Esophagus squamous epithelium (tissue), 5 donors: ENCODE measurements at regions of chr1 and their contacts with region 1.

Region 1: DNA sequence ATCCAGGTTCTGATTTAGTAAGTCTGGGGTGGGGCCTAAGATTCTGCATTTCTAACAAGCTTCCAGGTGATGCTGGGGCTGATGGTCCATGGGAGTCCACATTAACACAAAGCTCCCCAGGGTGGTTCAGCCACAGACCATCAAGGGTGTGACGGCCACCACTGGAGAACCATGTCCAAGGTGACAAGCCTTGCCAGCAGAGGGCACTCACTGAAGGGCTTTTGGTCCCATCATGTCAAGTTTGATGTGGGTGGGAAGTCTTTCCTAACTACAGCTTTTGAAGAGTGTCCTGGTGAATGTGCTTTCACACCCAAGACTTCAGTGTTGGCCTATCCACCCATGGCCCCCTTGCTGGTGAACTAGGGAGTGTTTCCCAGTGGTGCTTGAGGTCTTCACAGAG is 67.1 kb downstream of the UBE2T start:
- DNase-seq: no peak
- H3K4me3 ChIP-seq: no peak overlapping the region
- H3K27ac ChIP-seq: no peak overlapping the region
- H3K4me1 ChIP-seq: no peaks in the 10 kb centered on the region
- H3K27me3 ChIP-seq: peaks cover 0 to 35% (median 0%) of the 10 kb centered on the region in 4 donors
- CTCF ChIP-seq: peak in 2 of 6 experiments; percentile 14 to 30
- POLR2A ChIP-seq: no peak

Region 2: DNA sequence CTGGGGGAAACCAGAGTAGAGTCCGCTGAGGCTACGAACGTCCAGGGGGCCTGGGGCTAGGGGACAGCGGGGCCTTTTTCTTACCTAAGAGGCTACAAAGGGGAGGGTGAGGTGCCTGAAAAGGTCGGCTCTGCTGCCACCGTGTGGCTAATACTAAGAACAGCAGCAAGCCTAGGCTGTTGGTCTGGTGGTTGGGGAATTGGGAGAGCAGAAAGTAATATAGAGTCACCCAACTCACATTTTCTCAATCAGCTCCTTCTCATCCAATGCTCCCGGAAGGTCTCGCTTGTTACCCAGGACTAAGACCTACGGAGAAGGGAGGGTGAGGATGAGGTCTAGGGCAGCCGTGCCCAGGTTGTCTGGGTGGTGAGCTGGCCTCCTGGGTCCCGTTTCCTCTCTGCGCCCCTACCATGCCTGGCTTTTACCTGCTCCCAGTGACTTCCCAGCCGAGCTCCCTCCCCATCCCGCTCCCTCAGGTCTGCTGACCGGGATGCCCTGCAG is 139.3 kb before region 1 on chr1:
- intact Hi-C with region 1: no loop called
- DNase-seq: no peak
- H3K4me3 ChIP-seq: no peak overlapping the region
- H3K27ac ChIP-seq: peak overlapping the region; percentile 18 to 91 (median 51)
- H3K4me1 ChIP-seq: peaks cover 31 to 50% (median 42%) of the 10 kb centered on the region in 3 donors
- H3K27me3 ChIP-seq: no peaks in the 10 kb centered on the region
- CTCF ChIP-seq: peak; percentile 73 to 92 (median 82)
- POLR2A ChIP-seq: no peak

Region 3: DNA sequence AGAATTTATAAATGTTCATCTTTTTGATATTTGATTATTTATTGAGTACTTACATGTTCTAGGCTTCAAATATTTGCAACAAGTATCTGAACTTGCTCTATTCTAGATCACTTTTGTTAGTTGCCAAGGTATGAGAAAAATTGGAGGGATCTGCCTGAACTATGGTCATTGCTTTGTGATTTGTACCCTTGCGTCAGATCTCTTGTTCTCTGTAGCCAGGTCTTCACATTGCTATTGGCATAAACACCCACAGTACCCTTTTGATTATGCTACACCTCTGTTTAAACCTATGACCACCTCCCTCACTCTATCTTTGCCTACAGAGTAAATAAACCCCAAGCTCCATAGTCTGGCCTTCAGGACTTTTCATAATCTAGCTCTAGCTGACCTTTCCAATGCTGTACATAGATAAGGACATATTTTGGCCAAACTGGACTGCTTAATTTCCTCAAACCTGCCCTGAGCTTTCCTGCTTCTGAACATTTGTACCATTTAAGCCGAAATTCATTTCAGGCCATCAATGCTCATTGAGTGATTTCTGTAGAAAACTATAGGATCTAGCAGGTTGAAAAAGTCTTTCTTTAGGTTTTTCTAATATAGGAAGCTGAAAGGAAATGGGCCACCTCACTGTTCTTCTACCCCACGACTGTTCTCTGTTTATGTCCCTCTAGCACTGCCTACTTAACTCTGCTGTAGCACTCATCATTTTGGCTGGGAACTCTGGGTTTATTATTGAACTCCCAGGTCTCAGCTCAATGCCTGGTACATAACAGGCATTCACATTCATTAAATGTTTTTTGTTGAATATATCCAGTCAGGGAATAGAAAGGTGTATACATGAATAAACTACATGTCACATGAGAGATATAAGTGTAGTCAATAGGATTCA is 158.8 kb after region 1 on chr1:
- intact Hi-C with region 1: loop called (anchors 5 kb)
- DNase-seq: no peak
- H3K4me3 ChIP-seq: no peak overlapping the region
- H3K27ac ChIP-seq: no peak overlapping the region
- H3K4me1 ChIP-seq: no peaks in the 10 kb centered on the region
- H3K27me3 ChIP-seq: no peaks in the 10 kb centered on the region
- CTCF ChIP-seq: no peak
- POLR2A ChIP-seq: no peak